ENCODE measurements at regions of chr10 and their contacts with region 1.

Region 1: DNA sequence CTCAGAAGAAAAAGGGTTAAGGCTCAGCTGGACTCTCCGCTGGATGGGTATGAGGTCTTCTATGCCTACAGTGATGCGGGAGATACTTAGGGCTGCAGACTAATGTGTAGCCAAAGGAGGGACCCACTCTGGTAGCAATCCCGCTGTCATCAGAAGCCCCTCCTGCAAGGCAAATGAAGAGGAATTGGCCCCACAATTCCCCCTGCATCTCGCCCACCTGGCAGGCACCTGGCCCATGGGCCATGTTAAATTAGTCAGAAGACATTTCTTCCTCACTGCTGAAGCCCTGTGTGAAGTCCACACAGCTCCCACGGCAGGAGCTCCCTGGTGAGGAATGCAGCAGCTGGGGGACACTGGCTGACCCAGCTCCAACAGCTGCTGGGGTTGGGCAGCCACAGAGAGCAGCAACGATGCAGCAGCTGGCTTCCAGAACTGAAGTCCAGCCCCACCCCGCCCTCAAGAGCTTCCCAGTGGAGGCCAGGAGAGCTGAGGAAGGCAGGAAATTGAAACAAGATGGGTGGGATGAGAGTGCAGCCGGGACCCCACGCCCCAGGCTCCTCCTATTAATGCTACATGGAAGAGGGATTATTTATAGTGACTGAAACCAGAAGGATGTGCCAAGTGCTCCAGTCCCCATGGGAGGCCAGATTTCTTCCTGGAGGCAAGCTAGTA is 5.5 kb downstream of the VSTM4 start:
- DNase-seq: no peak
- H3K4me3 ChIP-seq: no peak overlapping the region
- H3K4me3 Mint-ChIP-seq: no peak overlapping the region
- H3K27ac ChIP-seq: no peak overlapping the region
- H3K27ac Mint-ChIP-seq: no peak overlapping the region
- H3K4me1 ChIP-seq: no peaks in the 10 kb centered on the region
- H3K4me1 Mint-ChIP-seq: peaks cover 10% of the 10 kb centered on the region
- H3K27me3 ChIP-seq: peaks cover 2 to 13% of the 10 kb centered on the region in 2 donors
- H3K27me3 Mint-ChIP-seq: peaks cover 15 to 22% (median 20%) of the 10 kb centered on the region in 3 donors
- CTCF ChIP-seq: no peak

Region 2: GRCh38 chr10:49001402-49001801 is 108.4 kb before region 1 on chr10:
- intact Hi-C with region 1: no loop called
- DNase-seq: no peak
- H3K4me3 ChIP-seq: no peak overlapping the region
- H3K4me3 Mint-ChIP-seq: no peak overlapping the region
- H3K27ac ChIP-seq: no peak overlapping the region
- H3K27ac Mint-ChIP-seq: no peak overlapping the region
- H3K4me1 ChIP-seq: no peaks in the 10 kb centered on the region
- H3K4me1 Mint-ChIP-seq: no peaks in the 10 kb centered on the region
- H3K27me3 ChIP-seq: no peaks in the 10 kb centered on the region
- H3K27me3 Mint-ChIP-seq: peaks cover 0 to 2% (median 2%) of the 10 kb centered on the region in 3 donors
- CTCF ChIP-seq: no peak

Region 3: GRCh38 chr10:49379596-49380410 is 270.0 kb after region 1 on chr10:
- intact Hi-C with region 1: no loop called
- DNase-seq: peak in 1 of 3 donors; percentile 11
- H3K4me3 ChIP-seq: no peak overlapping the region
- H3K4me3 Mint-ChIP-seq: no peak overlapping the region
- H3K27ac ChIP-seq: no peak overlapping the region
- H3K27ac Mint-ChIP-seq: no peak overlapping the region
- H3K4me1 ChIP-seq: no peaks in the 10 kb centered on the region
- H3K4me1 Mint-ChIP-seq: no peaks in the 10 kb centered on the region
- H3K27me3 ChIP-seq: no peaks in the 10 kb centered on the region
- H3K27me3 Mint-ChIP-seq: peaks cover 6 to 14% (median 8%) of the 10 kb centered on the region in 3 donors
- CTCF ChIP-seq: peak; percentile 41

Region 4: GRCh38 chr10:49407552-49408137 is 297.8 kb after region 1 on chr10:
- intact Hi-C with region 1: loop called in 1 of 2 experiments (anchors 10 kb)
- DNase-seq: peak; percentile 45 to 57 (median 57)
- H3K4me3 ChIP-seq: no peak overlapping the region
- H3K4me3 Mint-ChIP-seq: peak overlapping the region in 1 of 2 donors; percentile 49
- H3K27ac ChIP-seq: no peak overlapping the region
- H3K27ac Mint-ChIP-seq: peak overlapping the region in 2 of 7 donors; percentile 2 to 74
- H3K4me1 ChIP-seq: no peaks in the 10 kb centered on the region
- H3K4me1 Mint-ChIP-seq: no peaks in the 10 kb centered on the region
- H3K27me3 ChIP-seq: no peaks in the 10 kb centered on the region
- H3K27me3 Mint-ChIP-seq: peaks cover 12 to 34% (median 23%) of the 10 kb centered on the region in 3 donors
- CTCF ChIP-seq: peak; percentile 76

Measured in CD14-positive monocyte (primary cell).